ENCODE measurements at regions of chr13 and their contacts with region 1.

Region 1: GRCh38 chr13:95968906-95969305 is 84.3 kb downstream of the UGGT2 start:
- DNase-seq: no peak
- H3K4me3 ChIP-seq: no peak overlapping the region
- H3K27ac ChIP-seq: no peak overlapping the region
- H3K4me1 ChIP-seq: no peaks in the 10 kb centered on the region
- H3K27me3 ChIP-seq: no peaks in the 10 kb centered on the region
- CTCF ChIP-seq: no peak
- POLR2A ChIP-seq: no peak

Region 2: GRCh38 chr13:95982144-95982543 is 13.2 kb after region 1 on chr13:
- CTCF ChIA-PET with region 1: interaction called, 10 read pairs
- POLR2A ChIA-PET with region 1: no interaction called
- dilution Hi-C with region 1: no loop called
- intact Hi-C with region 1: no loop called
- DNase-seq: no peak
- H3K4me3 ChIP-seq: no peak overlapping the region
- H3K27ac ChIP-seq: no peak overlapping the region
- H3K4me1 ChIP-seq: no peaks in the 10 kb centered on the region
- H3K27me3 ChIP-seq: no peaks in the 10 kb centered on the region
- CTCF ChIP-seq: no peak
- POLR2A ChIP-seq: no peak